CD14-positive monocyte (primary cell): ENCODE measurements at regions of chr16 and their contacts with region 1.

Region 1: DNA sequence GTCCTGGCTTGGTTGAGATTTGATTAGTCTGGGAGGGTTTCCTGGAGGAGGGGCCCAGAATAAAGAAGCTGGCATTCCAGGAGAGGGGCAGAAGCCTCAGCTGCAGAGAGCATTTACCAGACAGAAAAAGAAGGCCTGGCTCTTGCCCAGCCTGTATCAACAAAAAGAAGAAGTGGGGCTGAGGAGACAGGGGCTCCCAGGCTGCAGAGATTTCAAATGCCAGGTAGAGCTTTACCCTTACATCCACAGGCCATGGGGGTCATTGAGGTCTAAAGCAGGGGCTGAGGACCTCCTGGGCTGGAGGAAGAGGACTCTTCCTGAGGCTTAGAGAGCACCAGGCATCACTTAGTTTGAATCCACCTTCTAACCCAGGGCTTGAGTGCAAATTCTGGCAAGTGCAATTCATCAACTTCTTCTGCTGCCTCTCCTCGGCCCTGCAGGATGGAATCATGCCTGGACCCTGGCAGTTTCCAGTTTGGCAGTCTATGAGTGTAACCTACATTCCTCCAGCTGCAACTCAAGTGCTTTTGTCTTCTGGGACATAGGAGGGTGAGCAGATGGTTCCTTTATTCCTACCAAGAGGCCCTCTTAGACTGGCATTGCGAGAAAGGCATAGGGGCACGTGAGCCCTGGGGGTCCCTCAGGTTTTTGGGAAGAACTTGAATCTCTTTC is 15.3 kb downstream of the CA7 start:
- DNase-seq: no peak
- H3K4me3 ChIP-seq: no peak overlapping the region
- H3K4me3 Mint-ChIP-seq: no peak overlapping the region
- H3K27ac ChIP-seq: no peak overlapping the region
- H3K27ac Mint-ChIP-seq: no peak overlapping the region
- H3K4me1 ChIP-seq: peaks cover 0 to 9% of the 10 kb centered on the region in 2 donors
- H3K4me1 Mint-ChIP-seq: peaks cover 5% of the 10 kb centered on the region
- H3K27me3 ChIP-seq: peaks cover 0 to 10% of the 10 kb centered on the region in 2 donors
- H3K27me3 Mint-ChIP-seq: peaks cover 13 to 27% (median 22%) of the 10 kb centered on the region in 3 donors
- CTCF ChIP-seq: no peak

Region 2: GRCh38 chr16:66608241-66609138 is 251.0 kb before region 1 on chr16:
- intact Hi-C with region 1: loop called in 1 of 2 experiments (anchors 10 kb)
- DNase-seq: peak; percentile 47 to 68 (median 65)
- H3K4me3 ChIP-seq: peak overlapping the region in 1 of 3 experiments; percentile 11
- H3K4me3 Mint-ChIP-seq: peak overlapping the region in 1 of 2 donors; percentile 16
- H3K27ac ChIP-seq: peak overlapping the region; percentile 39 to 40
- H3K27ac Mint-ChIP-seq: peak overlapping the region; percentile 21 to 87 (median 71)
- H3K4me1 ChIP-seq: peaks cover 42 to 45% of the 10 kb centered on the region in 2 donors
- H3K4me1 Mint-ChIP-seq: peaks cover 41% of the 10 kb centered on the region
- H3K27me3 ChIP-seq: no peaks in the 10 kb centered on the region
- H3K27me3 Mint-ChIP-seq: peaks cover 6 to 9% (median 7%) of the 10 kb centered on the region in 3 donors
- CTCF ChIP-seq: peak; percentile 72

Region 3: DNA sequence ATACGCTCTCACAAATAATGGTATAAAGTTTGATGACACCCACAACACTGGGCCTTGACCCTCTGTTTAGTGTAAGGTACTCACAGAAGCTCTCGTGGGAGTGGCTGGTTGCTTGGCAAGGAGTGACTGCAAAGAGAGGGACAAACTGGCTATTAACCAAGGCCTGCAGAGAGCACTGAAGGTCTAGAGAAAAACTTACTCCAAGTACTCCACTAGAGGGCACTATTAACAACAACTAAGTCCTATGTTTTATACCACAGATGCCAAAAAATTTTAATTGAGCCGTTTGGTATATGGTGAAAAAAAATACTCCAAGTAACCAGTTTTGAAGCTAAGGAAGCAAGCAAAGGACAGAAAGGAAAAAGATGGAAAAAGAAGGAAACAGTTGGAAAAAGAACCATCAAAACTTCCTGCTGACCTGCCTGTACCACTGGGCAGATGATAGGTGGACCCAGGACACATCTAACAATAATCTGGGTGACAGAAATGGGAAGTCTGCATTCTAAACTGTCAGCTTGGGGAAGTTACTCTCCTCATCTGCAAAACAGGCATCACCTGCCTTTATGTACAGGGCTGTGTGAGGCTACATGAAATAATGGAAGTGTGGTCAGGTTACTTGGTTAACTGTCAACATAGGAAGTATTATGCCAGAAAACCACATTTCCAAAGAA is 131.3 kb before region 1 on chr16:
- intact Hi-C with region 1: loop called (anchors 10 kb)
- DNase-seq: peak; percentile 41 to 75 (median 52)
- H3K4me3 ChIP-seq: no peak overlapping the region
- H3K4me3 Mint-ChIP-seq: no peak overlapping the region
- H3K27ac ChIP-seq: peak overlapping the region in 1 of 2 donors; percentile 51
- H3K27ac Mint-ChIP-seq: peak overlapping the region; percentile 2 to 51 (median 30)
- H3K4me1 ChIP-seq: peaks cover 4% of the 10 kb centered on the region in 2 donors
- H3K4me1 Mint-ChIP-seq: peaks cover 11% of the 10 kb centered on the region
- H3K27me3 ChIP-seq: no peaks in the 10 kb centered on the region
- H3K27me3 Mint-ChIP-seq: no peaks in the 10 kb centered on the region
- CTCF ChIP-seq: peak; percentile 76

Region 4: DNA sequence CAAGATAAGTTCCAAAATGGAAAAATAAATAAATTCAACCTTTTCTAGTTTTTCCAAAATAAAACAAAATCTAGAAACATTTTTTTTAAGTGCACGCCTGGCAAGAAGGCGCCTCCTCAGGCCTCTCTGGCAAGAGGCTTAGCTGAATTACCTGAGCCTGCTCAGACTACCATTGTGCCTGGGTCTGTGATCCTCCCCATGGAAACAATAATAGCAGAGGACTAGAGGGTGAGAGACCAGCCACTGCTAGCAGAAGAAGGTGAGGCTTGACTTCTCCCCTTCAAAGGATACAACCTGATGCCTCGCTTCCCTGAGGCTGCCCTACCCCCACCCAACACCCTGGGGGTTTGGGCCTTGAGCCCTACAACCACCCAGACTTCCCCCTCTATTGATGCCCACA is 73.0 kb before region 1 on chr16:
- intact Hi-C with region 1: no loop called
- DNase-seq: no peak
- H3K4me3 ChIP-seq: no peak overlapping the region
- H3K4me3 Mint-ChIP-seq: no peak overlapping the region
- H3K27ac ChIP-seq: no peak overlapping the region
- H3K27ac Mint-ChIP-seq: no peak overlapping the region
- H3K4me1 ChIP-seq: no peaks in the 10 kb centered on the region
- H3K4me1 Mint-ChIP-seq: no peaks in the 10 kb centered on the region
- H3K27me3 ChIP-seq: no peaks in the 10 kb centered on the region
- H3K27me3 Mint-ChIP-seq: peaks cover 2 to 7% (median 4%) of the 10 kb centered on the region in 3 donors
- CTCF ChIP-seq: no peak

Region 5: GRCh38 chr16:66947302-66948065 is 88.0 kb after region 1 on chr16:
- intact Hi-C with region 1: no loop called
- DNase-seq: peak; percentile 74 to 85 (median 76)
- H3K4me3 ChIP-seq: peak overlapping the region; percentile 38 to 77 (median 38)
- H3K4me3 Mint-ChIP-seq: peak overlapping the region; percentile 86 to 98
- H3K27ac ChIP-seq: no peak overlapping the region
- H3K27ac Mint-ChIP-seq: peak overlapping the region in 2 of 7 donors; percentile 37 to 73
- H3K4me1 ChIP-seq: peaks cover 17 to 18% of the 10 kb centered on the region in 2 donors
- H3K4me1 Mint-ChIP-seq: peaks cover 22% of the 10 kb centered on the region
- H3K27me3 ChIP-seq: peaks cover 27 to 46% of the 10 kb centered on the region in 2 donors
- H3K27me3 Mint-ChIP-seq: peaks cover 47 to 52% (median 48%) of the 10 kb centered on the region in 3 donors
- CTCF ChIP-seq: peak; percentile 90

Region 6: GRCh38 chr16:67000384-67001351 is 141.1 kb after region 1 on chr16:
- intact Hi-C with region 1: no loop called
- DNase-seq: peak; percentile 20 to 39 (median 20)
- H3K4me3 ChIP-seq: peak overlapping the region; percentile 53 to 84 (median 79)
- H3K4me3 Mint-ChIP-seq: peak overlapping the region; percentile 86 to 95
- H3K27ac ChIP-seq: no peak overlapping the region
- H3K27ac Mint-ChIP-seq: no peak overlapping the region
- H3K4me1 ChIP-seq: peaks cover 8 to 13% of the 10 kb centered on the region in 2 donors
- H3K4me1 Mint-ChIP-seq: peaks cover 8% of the 10 kb centered on the region
- H3K27me3 ChIP-seq: peaks cover 0 to 10% of the 10 kb centered on the region in 2 donors
- H3K27me3 Mint-ChIP-seq: peaks cover 11 to 35% (median 22%) of the 10 kb centered on the region in 3 donors
- CTCF ChIP-seq: no peak

Region 7: DNA sequence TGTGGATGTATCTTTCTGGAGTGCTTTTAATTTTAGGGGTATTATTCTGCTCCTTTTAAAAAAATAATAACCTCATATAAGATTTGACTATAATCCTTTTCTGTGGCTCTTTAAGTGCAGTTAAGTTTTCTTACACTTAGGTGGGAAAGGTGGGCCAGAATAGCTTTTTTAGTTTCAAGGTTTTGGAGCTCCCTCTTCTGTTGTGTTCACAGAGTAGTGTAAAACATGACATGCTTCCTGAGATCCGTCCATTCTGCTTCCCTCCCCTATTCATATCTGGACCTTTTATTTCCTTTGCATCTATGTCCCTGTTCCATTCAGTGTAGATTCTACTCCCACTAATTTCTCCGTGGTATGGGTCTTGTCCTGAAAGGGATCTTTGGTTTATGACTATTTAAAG is 479.9 kb after region 1 on chr16:
- intact Hi-C with region 1: no loop called
- DNase-seq: no peak
- H3K4me3 ChIP-seq: no peak overlapping the region
- H3K4me3 Mint-ChIP-seq: no peak overlapping the region
- H3K27ac ChIP-seq: no peak overlapping the region
- H3K27ac Mint-ChIP-seq: no peak overlapping the region
- H3K4me1 ChIP-seq: no peaks in the 10 kb centered on the region
- H3K4me1 Mint-ChIP-seq: no peaks in the 10 kb centered on the region
- H3K27me3 ChIP-seq: no peaks in the 10 kb centered on the region
- H3K27me3 Mint-ChIP-seq: peaks cover 0 to 3% (median 3%) of the 10 kb centered on the region in 3 donors
- CTCF ChIP-seq: no peak